ENCODE measurements at regions of chr11 and their contacts with region 1.

Region 1: GRCh38 chr11:4072668-4073285 is 21.8 kb upstream of the RRM1 start:
- DNase-seq: peak; percentile 80
- ATAC-seq: peak; percentile 80
- H3K4me3 ChIP-seq: no peak overlapping the region
- H3K27ac ChIP-seq: no peak overlapping the region
- H3K4me1 ChIP-seq: 0 out of 2 replicates have a peak, but pooled peaks cover 5% of the 10 kb centered on the region
- H3K27me3 ChIP-seq: no peaks in the 10 kb centered on the region
- CTCF ChIP-seq: peak; percentile 95
- POLR2A ChIP-seq: 0 out of 2 replicates have a peak, but pooled peaks have one; percentile 36
- RAD21 ChIP-seq: peak; percentile 100

Region 2: DNA sequence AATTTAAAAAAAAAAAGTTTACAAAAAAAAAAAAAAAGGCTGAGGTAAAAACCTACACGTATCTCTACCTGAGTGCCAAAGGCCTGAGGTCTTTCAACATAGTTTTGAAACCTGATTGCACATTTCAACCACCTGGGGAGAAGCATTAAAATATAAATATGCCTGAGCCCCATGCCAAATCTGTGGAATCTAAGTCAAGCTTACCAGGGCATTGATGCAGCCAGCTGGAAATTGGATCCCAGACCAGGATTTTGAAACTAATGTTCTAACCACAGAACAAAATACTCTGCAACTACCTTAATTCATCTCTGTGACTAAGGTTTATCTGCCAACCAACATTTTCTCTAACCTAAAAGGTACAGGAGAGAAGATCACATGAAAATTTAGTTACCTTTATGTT is 362.8 kb before region 1 on chr11:
- CTCF ChIA-PET with region 1: no interaction called
- POLR2A ChIA-PET with region 1: no interaction called
- dilution Hi-C with region 1: no loop called
- in situ Hi-C with region 1: no loop called
- intact Hi-C with region 1: loop called (anchors 10 kb)
- DNase-seq: peak; percentile 32
- ATAC-seq: 0 out of 2 replicates have a peak, but pooled peaks have one; percentile 18
- H3K4me3 ChIP-seq: no peak overlapping the region
- H3K27ac ChIP-seq: peak overlapping the region; percentile 42; the same call in 1 of the 2 replicates
- H3K4me1 ChIP-seq: peaks cover 3% of the 10 kb centered on the region
- H3K27me3 ChIP-seq: no peaks in the 10 kb centered on the region
- CTCF ChIP-seq: no peak
- POLR2A ChIP-seq: no peak
- RAD21 ChIP-seq: no peak

Region 3: DNA sequence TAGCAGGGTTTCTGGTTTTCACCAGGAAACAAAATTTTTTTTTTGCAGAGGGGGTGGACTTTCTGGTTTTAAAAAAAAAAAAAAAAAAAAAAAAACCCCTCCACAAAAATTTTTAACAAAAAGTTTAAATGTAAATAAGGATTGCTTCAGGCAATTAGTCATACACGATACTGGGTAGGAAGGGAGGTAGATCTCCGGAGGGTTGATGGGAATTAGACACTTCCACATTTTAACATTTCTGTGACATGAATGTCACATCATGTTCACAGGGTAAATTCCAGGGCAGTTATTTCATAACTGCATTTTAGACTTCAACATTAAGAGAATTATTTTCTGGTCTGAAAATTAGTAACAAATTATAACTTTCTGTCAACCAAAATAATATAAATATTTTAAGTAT is 291.4 kb before region 1 on chr11:
- CTCF ChIA-PET with region 1: no interaction called
- POLR2A ChIA-PET with region 1: no interaction called
- dilution Hi-C with region 1: no loop called
- in situ Hi-C with region 1: no loop called
- intact Hi-C with region 1: loop called (anchors 10 kb)
- DNase-seq: peak; percentile 55
- ATAC-seq: peak; percentile 70
- H3K4me3 ChIP-seq: no peak overlapping the region
- H3K27ac ChIP-seq: no peak overlapping the region
- H3K4me1 ChIP-seq: peaks cover 11% of the 10 kb centered on the region
- H3K27me3 ChIP-seq: no peaks in the 10 kb centered on the region
- CTCF ChIP-seq: no peak
- POLR2A ChIP-seq: no peak
- RAD21 ChIP-seq: no peak

Region 4: GRCh38 chr11:3807909-3808860 is 264.6 kb before region 1 on chr11 and contains the start of gene PGAP2:
- CTCF ChIA-PET with region 1: no interaction called
- POLR2A ChIA-PET with region 1: no interaction called
- dilution Hi-C with region 1: no loop called
- in situ Hi-C with region 1: no loop called
- intact Hi-C with region 1: no loop called
- DNase-seq: peak; percentile 35
- ATAC-seq: peak; percentile 89
- H3K4me3 ChIP-seq: peak within 1 kb of the TSS; percentile 78
- H3K27ac ChIP-seq: peak within 1 kb of the TSS; percentile 39
- H3K4me1 ChIP-seq: no peaks in the 10 kb centered on the region
- H3K27me3 ChIP-seq: no peaks in the 10 kb centered on the region
- CTCF ChIP-seq: peak; percentile 69
- POLR2A ChIP-seq: no peak
- RAD21 ChIP-seq: peak; percentile 68
- total RNA-seq, gene PGAP2: 10.6 TPM in 2 replicates

Region 5: GRCh38 chr11:3841426-3842350 is 231.1 kb before region 1 on chr11:
- CTCF ChIA-PET with region 1: interaction called, 11 read pairs
- POLR2A ChIA-PET with region 1: interaction called, 10 read pairs
- dilution Hi-C with region 1: no loop called
- in situ Hi-C with region 1: loop called (anchors 5 kb)
- intact Hi-C with region 1: no loop called
- DNase-seq: peak; percentile 82
- ATAC-seq: peak; percentile 76
- H3K4me3 ChIP-seq: peak overlapping the region; percentile 94
- H3K27ac ChIP-seq: peak overlapping the region; percentile 95
- H3K4me1 ChIP-seq: peaks cover 16% of the 10 kb centered on the region
- H3K27me3 ChIP-seq: no peaks in the 10 kb centered on the region
- CTCF ChIP-seq: peak; percentile 79
- POLR2A ChIP-seq: peak; percentile 57; the same call in 1 of the 2 replicates
- RAD21 ChIP-seq: peak; percentile 50

Region 6: GRCh38 chr11:3849297-3849874 is 223.4 kb before region 1 on chr11:
- CTCF ChIA-PET with region 1: interaction called, 186 read pairs
- POLR2A ChIA-PET with region 1: no interaction called
- dilution Hi-C with region 1: no loop called
- in situ Hi-C with region 1: loop called (anchors 5 kb)
- intact Hi-C with region 1: loop called (anchors 1 kb)
- DNase-seq: peak; percentile 41
- ATAC-seq: peak; percentile 90
- H3K4me3 ChIP-seq: no peak overlapping the region
- H3K27ac ChIP-seq: no peak overlapping the region
- H3K4me1 ChIP-seq: peaks cover 2% of the 10 kb centered on the region; the same call in 1 of the 2 replicates
- H3K27me3 ChIP-seq: no peaks in the 10 kb centered on the region; the same call in 1 of the 2 replicates
- CTCF ChIP-seq: peak; percentile 75
- POLR2A ChIP-seq: no peak
- RAD21 ChIP-seq: peak; percentile 71

Region 7: GRCh38 chr11:3854977-3855807 is 217.6 kb before region 1 on chr11 and contains the start of gene STIM1:
- CTCF ChIA-PET with region 1: interaction called, 186 read pairs
- POLR2A ChIA-PET with region 1: interaction called, 7 read pairs
- dilution Hi-C with region 1: no loop called
- in situ Hi-C with region 1: no loop called
- intact Hi-C with region 1: loop called (anchors 1 kb)
- DNase-seq: peak; percentile 90
- ATAC-seq: peak; percentile 93
- H3K4me3 ChIP-seq: peak within 1 kb of the TSS; percentile 83
- H3K27ac ChIP-seq: peak within 1 kb of the TSS; percentile 87
- H3K4me1 ChIP-seq: peaks cover 16% of the 10 kb centered on the region
- H3K27me3 ChIP-seq: no peaks in the 10 kb centered on the region
- CTCF ChIP-seq: peak; percentile 97
- POLR2A ChIP-seq: peak; percentile 40; the same call in 1 of the 2 replicates
- RAD21 ChIP-seq: peak; percentile 90
- total RNA-seq, gene STIM1: 13.9 and 17.9 TPM in 2 replicates

Region 8: GRCh38 chr11:4087551-4087950 is 14.8 kb after region 1 on chr11:
- CTCF ChIA-PET with region 1: interaction called, 12 read pairs
- POLR2A ChIA-PET with region 1: no interaction called
- dilution Hi-C with region 1: no loop called
- in situ Hi-C with region 1: no loop called
- intact Hi-C with region 1: no loop called
- DNase-seq: peak; percentile 29
- ATAC-seq: peak; percentile 67
- H3K4me3 ChIP-seq: no peak overlapping the region
- H3K27ac ChIP-seq: no peak overlapping the region
- H3K4me1 ChIP-seq: peaks cover 3% of the 10 kb centered on the region; the same call in 1 of the 2 replicates
- H3K27me3 ChIP-seq: no peaks in the 10 kb centered on the region
- CTCF ChIP-seq: peak; percentile 35
- POLR2A ChIP-seq: no peak
- RAD21 ChIP-seq: no peak